ENCODE measurements at regions of chr1 and their contacts with region 1.

Region 1: DNA sequence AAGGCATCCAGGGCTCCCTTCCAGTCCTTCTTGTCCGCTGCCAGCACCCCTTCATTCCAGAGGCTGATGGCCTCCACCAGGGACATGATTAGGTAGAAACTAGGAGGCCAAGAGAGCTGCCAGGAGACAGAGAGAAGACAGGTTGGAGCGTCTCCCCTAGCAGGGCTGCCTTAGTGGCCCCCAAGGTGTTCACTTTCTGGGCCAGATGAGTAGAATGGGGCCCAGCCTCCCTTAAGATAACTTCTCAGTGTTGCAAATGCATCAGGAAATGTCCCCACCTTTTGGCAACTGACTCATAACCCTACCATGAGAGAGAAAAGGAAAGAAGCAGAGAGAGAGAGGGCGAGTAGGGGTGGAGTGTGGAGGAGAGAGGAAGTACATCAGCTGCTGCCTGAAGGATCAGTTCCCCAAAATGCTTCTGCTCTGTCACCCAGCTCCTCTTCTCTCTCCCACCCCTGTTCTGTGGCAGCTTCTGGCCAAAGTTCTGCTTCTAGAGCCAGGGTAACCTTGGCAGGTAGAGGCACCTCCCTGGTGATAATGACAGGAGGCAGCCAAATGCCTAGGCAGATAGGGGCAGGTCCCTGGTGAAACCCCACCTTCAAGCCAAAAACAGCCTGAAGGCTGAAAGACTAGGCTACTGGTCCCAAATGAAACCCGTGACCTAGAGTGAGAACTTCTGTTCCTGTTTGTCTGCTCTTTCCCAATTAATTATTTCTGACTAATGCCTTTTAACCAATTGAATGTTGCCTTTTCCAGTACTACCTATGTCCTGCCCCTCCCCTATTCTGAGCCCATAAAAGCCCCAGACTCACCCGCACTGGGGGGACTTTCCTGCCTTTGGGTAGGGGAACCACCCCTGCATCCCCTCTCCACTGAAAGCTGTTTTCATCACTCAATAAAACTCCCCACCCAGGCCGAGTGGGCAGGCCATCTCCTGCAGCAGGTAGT is at the start of gene NCF2:
- DNase-seq: peak; percentile 77
- ATAC-seq: peak; percentile 92
- H3K4me3 Mint-ChIP-seq: peak within 1 kb of the TSS; percentile 50
- H3K27ac Mint-ChIP-seq: peak within 1 kb of the TSS; percentile 77
- H3K4me1 Mint-ChIP-seq: peaks cover 43% of the 10 kb centered on the region
- H3K27me3 Mint-ChIP-seq: peaks cover 2% of the 10 kb centered on the region
- CTCF ChIP-seq: no peak
- total RNA-seq, gene NCF2: 4.2 to 4.7 TPM

Region 2: GRCh38 chr1:183388735-183389134 is 201.8 kb before region 1 on chr1:
- CTCF ChIA-PET with region 1: no interaction called
- POLR2A ChIA-PET with region 1: no interaction called
- intact Hi-C with region 1: no loop called
- DNase-seq: no peak
- ATAC-seq: no peak
- H3K4me3 Mint-ChIP-seq: no peak overlapping the region
- H3K27ac Mint-ChIP-seq: no peak overlapping the region
- H3K4me1 Mint-ChIP-seq: no peaks in the 10 kb centered on the region
- H3K27me3 Mint-ChIP-seq: peaks cover 6% of the 10 kb centered on the region
- CTCF ChIP-seq: no peak

Region 3: GRCh38 chr1:183567584-183567983 is 22.9 kb before region 1 on chr1:
- CTCF ChIA-PET with region 1: interaction called, 3 read pairs
- POLR2A ChIA-PET with region 1: interaction called, 19 read pairs
- intact Hi-C with region 1: no loop called
- DNase-seq: peak; percentile 42
- ATAC-seq: peak; percentile 47
- H3K4me3 Mint-ChIP-seq: no peak overlapping the region
- H3K27ac Mint-ChIP-seq: no peak overlapping the region
- H3K4me1 Mint-ChIP-seq: peaks cover 23% of the 10 kb centered on the region
- H3K27me3 Mint-ChIP-seq: no peaks in the 10 kb centered on the region
- CTCF ChIP-seq: no peak

Region 4: GRCh38 chr1:183580281-183580682 is 10.2 kb before region 1 on chr1:
- CTCF ChIA-PET with region 1: interaction called, 13 read pairs
- POLR2A ChIA-PET with region 1: no interaction called
- intact Hi-C with region 1: no loop called
- DNase-seq: peak; percentile 40
- ATAC-seq: peak; percentile 80
- H3K4me3 Mint-ChIP-seq: peak overlapping the region; percentile 45
- H3K27ac Mint-ChIP-seq: peak overlapping the region; percentile 76
- H3K4me1 Mint-ChIP-seq: peaks cover 17% of the 10 kb centered on the region
- H3K27me3 Mint-ChIP-seq: no peaks in the 10 kb centered on the region
- CTCF ChIP-seq: no peak

Region 5: DNA sequence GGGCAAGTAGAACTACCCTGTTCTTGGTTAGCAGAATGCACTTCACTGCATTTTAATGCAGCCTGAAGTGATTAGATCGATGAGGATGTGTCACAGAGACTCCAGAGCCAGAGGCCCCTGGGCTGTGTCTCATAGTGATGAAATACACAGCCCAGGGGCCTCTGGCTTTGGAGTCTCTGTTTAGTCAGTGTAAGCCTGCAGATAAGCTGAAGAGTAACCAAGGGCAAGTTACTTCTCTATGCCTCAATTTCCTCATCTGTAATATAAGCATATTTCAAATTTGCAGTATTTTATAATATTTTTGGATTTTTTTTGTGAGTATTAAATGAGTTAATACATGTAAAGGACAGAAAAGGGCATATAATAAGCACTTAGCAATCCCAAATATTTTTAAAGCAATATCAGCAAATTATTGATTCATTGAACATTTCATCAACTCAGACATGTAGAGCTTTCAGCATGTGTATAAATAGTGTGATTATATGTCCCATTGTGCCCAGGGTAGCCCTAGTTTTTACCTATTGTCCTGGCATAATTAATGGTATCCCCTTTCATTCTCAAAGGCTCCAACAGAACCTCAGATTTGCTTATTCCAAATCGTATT is 86.2 kb after region 1 on chr1:
- CTCF ChIA-PET with region 1: no interaction called
- POLR2A ChIA-PET with region 1: no interaction called
- intact Hi-C with region 1: no loop called
- DNase-seq: no peak
- ATAC-seq: no peak
- H3K4me3 Mint-ChIP-seq: no peak overlapping the region
- H3K27ac Mint-ChIP-seq: no peak overlapping the region
- H3K4me1 Mint-ChIP-seq: no peaks in the 10 kb centered on the region
- H3K27me3 Mint-ChIP-seq: peaks cover 3% of the 10 kb centered on the region
- CTCF ChIP-seq: no peak

Measured in activated CD8-positive, alpha-beta T cell treated with anti-CD3 and anti-CD28 coated beads for 36 hours (primary cell).